ENCODE measurements at regions of chr13 and their contacts with region 1.

Region 1: DNA sequence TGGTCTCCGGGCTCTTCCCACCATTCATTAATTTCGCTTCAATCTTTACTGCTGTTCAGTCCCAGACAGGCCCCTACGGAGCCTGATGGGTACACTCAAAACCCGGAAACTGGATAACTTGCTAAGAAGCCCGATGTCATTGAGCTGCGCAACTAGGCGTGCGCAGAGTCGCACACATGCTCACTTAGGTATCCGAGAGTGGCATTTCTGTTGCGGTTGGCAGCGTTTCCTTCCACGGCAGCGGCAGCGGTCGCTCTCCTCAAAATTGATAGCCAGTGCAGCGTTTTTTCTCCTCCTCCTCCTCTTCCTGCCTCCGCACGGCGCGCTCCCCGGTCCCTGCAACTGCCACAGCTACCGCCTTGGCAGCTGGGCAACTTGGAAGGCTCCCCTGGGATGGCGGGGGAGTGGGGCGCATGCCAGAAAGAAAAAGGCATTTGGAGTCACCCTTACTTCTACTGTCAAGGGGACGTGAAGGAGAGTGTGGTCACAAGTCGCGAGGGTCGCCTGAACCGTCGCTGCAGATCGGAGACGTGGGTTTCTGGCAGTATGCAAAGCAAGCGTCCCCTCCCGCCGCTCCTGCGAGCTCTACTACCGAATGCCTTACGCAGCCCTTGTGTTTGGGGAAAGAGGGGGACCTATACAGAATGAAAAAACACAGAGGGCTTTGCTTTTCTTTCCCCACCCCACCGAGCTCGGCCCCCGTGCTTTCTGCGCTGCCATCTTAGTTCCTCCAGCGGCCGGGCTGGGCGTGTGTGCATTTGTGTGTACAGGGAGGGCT is 2.4 kb upstream of the MYCBP2 start:
- DNase-seq: peak; percentile 91 to 92
- ATAC-seq: peak; percentile 89
- H3K4me3 ChIP-seq: peak overlapping the region; percentile 35 to 76
- H3K27ac ChIP-seq: peak overlapping the region in 1 of 2 donors; percentile 58
- H3K4me1 ChIP-seq: no peaks in the 10 kb centered on the region
- H3K27me3 ChIP-seq: no peaks in the 10 kb centered on the region

Region 2: GRCh38 chr13:77026818-77027585 is 302.3 kb before region 1 on chr13 and contains the start of gene FBXL3:
- intact Hi-C with region 1: loop called (anchors 10 kb)
- DNase-seq: peak; percentile 90 to 94
- ATAC-seq: peak; percentile 92
- H3K4me3 ChIP-seq: peak within 1 kb of the TSS; percentile 98 to 100
- H3K27ac ChIP-seq: peak within 1 kb of the TSS; percentile 92 to 99
- H3K4me1 ChIP-seq: peaks cover 0 to 2% of the 10 kb centered on the region in 2 donors
- H3K27me3 ChIP-seq: no peaks in the 10 kb centered on the region
- total RNA-seq, gene FBXL3: 62.1 to 73.9 TPM

Region 3: DNA sequence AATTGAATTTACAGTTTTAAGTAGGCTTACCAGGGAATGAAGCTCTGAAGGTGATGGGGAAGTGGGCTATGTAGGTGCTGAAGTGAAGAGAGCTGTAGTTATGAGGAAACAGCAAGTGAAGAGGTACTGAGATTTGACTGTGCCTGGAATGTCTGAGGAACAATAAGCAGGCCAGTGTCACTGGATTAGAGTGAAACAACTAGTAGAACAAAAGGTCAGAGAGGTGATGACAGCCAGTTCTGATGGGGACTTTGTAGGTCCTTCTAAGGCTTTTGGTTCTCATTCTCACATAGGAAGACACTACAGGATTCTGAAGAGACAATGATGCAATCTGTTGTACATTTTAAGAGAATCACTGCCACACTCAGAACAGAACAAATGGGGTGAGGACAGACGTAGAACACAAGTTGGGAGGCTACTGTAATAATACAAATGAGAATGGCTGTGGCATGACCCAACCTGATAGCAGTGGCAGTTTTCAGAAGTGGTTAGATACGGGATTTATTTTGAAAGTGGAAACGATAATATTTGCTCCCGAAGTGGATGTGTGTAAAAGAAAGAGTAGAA is 133.2 kb before region 1 on chr13:
- intact Hi-C with region 1: no loop called
- DNase-seq: no peak
- ATAC-seq: no peak
- H3K4me3 ChIP-seq: no peak overlapping the region
- H3K27ac ChIP-seq: no peak overlapping the region
- H3K4me1 ChIP-seq: no peaks in the 10 kb centered on the region
- H3K27me3 ChIP-seq: no peaks in the 10 kb centered on the region

Region 4: DNA sequence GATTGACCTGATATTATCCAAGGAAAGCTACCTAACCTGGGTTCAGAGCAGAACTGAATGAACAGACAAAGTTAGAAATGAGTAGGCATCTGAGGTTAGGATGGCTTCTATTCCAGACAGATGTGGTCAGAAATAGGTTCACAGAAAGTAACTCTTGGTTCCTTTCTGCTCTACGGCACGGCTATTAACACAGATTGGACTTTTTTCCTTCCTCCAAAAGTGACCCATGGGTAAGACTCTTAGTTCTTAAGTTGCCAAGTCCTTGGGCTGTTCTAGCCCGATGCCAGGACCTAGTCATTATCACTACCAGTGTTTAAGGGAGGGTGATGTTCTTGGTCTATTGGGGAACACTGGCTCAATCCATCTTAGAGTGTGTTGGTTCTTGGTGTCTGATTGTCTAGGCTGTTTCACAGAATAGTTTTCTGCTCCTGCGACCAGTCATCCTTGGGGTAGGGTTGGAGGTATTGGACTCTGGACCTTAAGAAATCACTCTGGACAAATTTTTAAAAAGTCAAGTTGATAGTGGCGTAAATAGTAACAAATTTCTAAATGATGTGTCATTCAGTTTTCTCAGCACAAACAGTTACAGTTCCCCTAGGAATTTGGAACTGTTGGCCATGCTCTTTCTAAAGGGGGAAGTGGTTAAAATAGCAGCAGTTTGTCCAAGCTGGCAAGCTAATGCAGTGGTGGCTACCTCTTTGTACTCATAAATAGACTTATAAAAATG is 57.7 kb after region 1 on chr13:
- intact Hi-C with region 1: loop called (anchors 2 to 5 kb)
- DNase-seq: peak in 1 of 2 donors; percentile 68
- ATAC-seq: peak; percentile 89
- H3K4me3 ChIP-seq: no peak overlapping the region
- H3K27ac ChIP-seq: peak overlapping the region; percentile 76 to 91
- H3K4me1 ChIP-seq: peaks cover 8 to 9% of the 10 kb centered on the region in 2 donors
- H3K27me3 ChIP-seq: peaks cover 0 to 2% of the 10 kb centered on the region in 2 donors